ENCODE measurements at regions of chr5 and their contacts with region 1.

Region 1: GRCh38 chr5:126449751-126450271 is 26.6 kb downstream of the GRAMD2B start:
- DNase-seq: peak in 5 of 7 donors; percentile 39 to 60 (median 49)
- H3K4me3 ChIP-seq: no peak overlapping the region
- H3K27ac ChIP-seq: peak overlapping the region; percentile 45 to 74 (median 66)
- H3K4me1 ChIP-seq: peaks cover 10 to 28% of the 10 kb centered on the region in 2 donors
- H3K27me3 ChIP-seq: no peaks in the 10 kb centered on the region
- CTCF ChIP-seq: no peak
- POLR2A ChIP-seq: peak in 1 of 2 donors; percentile 41

Region 2: GRCh38 chr5:126309860-126310259 is 140.0 kb before region 1 on chr5:
- intact Hi-C with region 1: no loop called
- DNase-seq: no peak
- H3K4me3 ChIP-seq: no peak overlapping the region
- H3K27ac ChIP-seq: no peak overlapping the region
- H3K4me1 ChIP-seq: no peaks in the 10 kb centered on the region
- H3K27me3 ChIP-seq: no peaks in the 10 kb centered on the region
- CTCF ChIP-seq: no peak
- POLR2A ChIP-seq: no peak

Region 3: DNA sequence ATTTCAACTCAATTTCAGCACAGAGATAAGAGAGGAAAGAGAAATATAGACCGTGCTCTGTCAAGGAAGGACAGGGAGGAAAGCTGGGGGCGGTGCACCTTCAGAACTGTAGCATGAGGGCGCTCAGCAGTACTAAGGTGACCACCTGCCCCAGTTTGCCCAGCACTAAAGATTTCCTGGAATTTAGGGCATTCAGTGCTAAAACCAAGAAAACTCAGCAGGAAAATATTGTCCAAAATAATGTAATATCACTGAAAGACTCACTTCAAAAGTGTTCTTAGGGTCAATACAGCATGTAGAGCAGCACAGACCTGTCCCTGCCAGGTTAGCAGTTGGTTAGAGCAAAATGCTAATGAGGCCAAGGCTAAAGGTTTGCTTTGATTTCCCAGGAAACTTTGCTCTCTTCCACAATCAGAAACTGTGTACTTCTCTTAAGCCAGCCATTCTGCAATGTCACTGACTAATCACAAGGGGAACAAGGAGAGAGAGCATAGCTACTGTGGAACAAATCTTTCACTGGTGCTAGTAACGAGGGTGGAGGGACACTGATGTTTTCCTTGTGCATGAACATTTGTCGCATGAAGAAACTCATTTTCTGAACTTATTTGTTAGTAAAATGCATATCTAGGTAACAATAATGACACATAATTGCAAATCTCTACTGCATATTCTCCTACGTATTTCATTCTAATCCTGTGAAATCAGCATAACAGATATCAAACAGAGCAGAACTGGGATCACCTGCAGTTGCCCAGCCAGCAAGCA is 79.7 kb before region 1 on chr5:
- intact Hi-C with region 1: loop called in 1 of 2 experiments (anchors 10 kb)
- DNase-seq: peak in 3 of 7 donors; percentile 11 to 27 (median 18)
- H3K4me3 ChIP-seq: no peak overlapping the region
- H3K27ac ChIP-seq: peak overlapping the region in 4 of 5 donors; percentile 7 to 75 (median 27)
- H3K4me1 ChIP-seq: peaks cover 16 to 17% of the 10 kb centered on the region in 2 donors
- H3K27me3 ChIP-seq: no peaks in the 10 kb centered on the region
- CTCF ChIP-seq: peak in 4 of 6 experiments; percentile 29 to 49 (median 42)
- POLR2A ChIP-seq: peak in 1 of 2 donors; percentile 48

Region 4: GRCh38 chr5:126499853-126500342 is 50.1 kb after region 1 on chr5:
- intact Hi-C with region 1: loop called in 1 of 2 experiments (anchors 10 kb)
- DNase-seq: no peak
- H3K4me3 ChIP-seq: no peak overlapping the region
- H3K27ac ChIP-seq: peak overlapping the region in 2 of 5 donors; percentile 41 to 42
- H3K4me1 ChIP-seq: peaks cover 17 to 43% of the 10 kb centered on the region in 2 donors
- H3K27me3 ChIP-seq: no peaks in the 10 kb centered on the region
- CTCF ChIP-seq: peak; percentile 39 to 48 (median 44)
- POLR2A ChIP-seq: no peak

Region 5: GRCh38 chr5:126516133-126516532 is 66.3 kb after region 1 on chr5:
- intact Hi-C with region 1: no loop called
- DNase-seq: no peak
- H3K4me3 ChIP-seq: no peak overlapping the region
- H3K27ac ChIP-seq: peak overlapping the region in 1 of 5 donors; percentile 36
- H3K4me1 ChIP-seq: peaks cover 24 to 32% of the 10 kb centered on the region in 2 donors
- H3K27me3 ChIP-seq: no peaks in the 10 kb centered on the region
- CTCF ChIP-seq: no peak
- POLR2A ChIP-seq: no peak

Measured in adrenal gland (tissue), 19 donors.